ENCODE measurements at regions of chr2 and their contacts with region 1.

Region 1: GRCh38 chr2:54723131-54723995 is at the start of gene EML6:
- DNase-seq: peak; percentile 99
- H3K4me3 Mint-ChIP-seq: peak within 1 kb of the TSS; percentile 89
- H3K27ac Mint-ChIP-seq: peak within 1 kb of the TSS; percentile 64
- H3K4me1 Mint-ChIP-seq: peaks cover 17% of the 10 kb centered on the region
- H3K27me3 Mint-ChIP-seq: peaks cover 77% of the 10 kb centered on the region
- total RNA-seq, gene EML6: 0.23 and 0.25 TPM in 2 replicates

Region 2: GRCh38 chr2:54115284-54116137 is 607.9 kb before region 1 on chr2 and contains the start of gene ACYP2:
- intact Hi-C with region 1: loop called (anchors 1 kb)
- DNase-seq: peak; percentile 88
- H3K4me3 Mint-ChIP-seq: peak within 1 kb of the TSS; percentile 89
- H3K27ac Mint-ChIP-seq: peak within 1 kb of the TSS; percentile 97
- H3K4me1 Mint-ChIP-seq: peaks cover 7% of the 10 kb centered on the region
- H3K27me3 Mint-ChIP-seq: peaks cover 8% of the 10 kb centered on the region
- total RNA-seq, gene ACYP2: 4.3 and 6.5 TPM in 2 replicates

Region 3: GRCh38 chr2:54669677-54670479 is 53.5 kb before region 1 on chr2:
- intact Hi-C with region 1: no loop called
- DNase-seq: no peak
- H3K4me3 Mint-ChIP-seq: no peak overlapping the region
- H3K27ac Mint-ChIP-seq: no peak overlapping the region
- H3K4me1 Mint-ChIP-seq: peaks cover 28% of the 10 kb centered on the region
- H3K27me3 Mint-ChIP-seq: peaks cover 4% of the 10 kb centered on the region

Region 4: DNA sequence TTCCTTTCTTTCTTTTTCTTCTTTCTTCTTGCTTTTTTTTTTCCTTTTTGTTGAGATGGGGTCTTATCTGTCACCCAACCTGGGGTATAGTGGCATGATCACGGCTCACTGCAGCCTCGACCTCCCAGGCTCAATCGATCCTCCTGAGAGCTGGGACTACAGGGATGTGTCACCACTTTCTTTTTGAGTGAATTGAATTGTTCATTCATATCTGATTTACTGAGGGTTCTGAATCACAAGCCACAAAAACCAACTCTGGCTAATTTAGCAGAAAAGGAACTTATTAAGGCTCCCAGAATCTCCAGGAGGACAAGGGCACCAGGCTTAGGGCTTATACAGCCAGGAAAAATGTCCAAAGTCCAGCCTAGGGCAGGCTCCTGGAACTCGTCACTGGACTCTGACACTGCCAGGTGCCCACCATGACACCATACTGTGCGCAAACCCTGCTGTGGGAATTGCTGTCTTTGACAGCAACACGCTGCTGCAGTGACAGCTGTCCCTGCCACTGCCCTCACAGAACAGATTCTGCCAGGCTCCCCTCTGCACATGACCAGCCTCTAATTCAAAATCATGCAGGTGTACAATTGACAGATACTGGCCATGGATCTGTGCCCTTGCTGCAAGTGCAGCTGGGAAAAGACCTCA is 42.8 kb before region 1 on chr2:
- intact Hi-C with region 1: loop called (anchors 2 kb)
- DNase-seq: peak; percentile 39
- H3K4me3 Mint-ChIP-seq: peak overlapping the region; percentile 78
- H3K27ac Mint-ChIP-seq: peak overlapping the region; percentile 65
- H3K4me1 Mint-ChIP-seq: peaks cover 61% of the 10 kb centered on the region
- H3K27me3 Mint-ChIP-seq: peaks cover 54% of the 10 kb centered on the region

Region 5: DNA sequence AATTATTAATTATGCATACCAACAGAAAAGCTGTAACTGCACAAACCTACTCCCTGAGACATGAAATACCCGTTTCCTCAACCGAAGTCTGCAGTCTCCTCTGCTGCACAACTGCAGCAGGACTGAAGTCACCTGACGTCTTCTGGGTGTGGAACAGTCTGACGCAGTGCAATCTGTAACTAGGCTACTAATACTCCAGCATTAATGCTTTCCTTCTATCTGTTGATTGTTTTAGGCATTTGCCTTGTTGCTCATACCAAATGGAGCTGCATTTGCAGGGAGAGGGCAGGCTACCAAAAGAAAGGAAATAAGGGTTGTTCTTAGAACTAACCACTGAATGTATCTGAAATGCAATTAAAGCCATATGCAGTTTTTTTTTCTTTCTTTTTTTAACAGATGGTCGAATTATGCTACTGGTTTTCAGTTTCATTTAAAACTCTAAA is 286.8 kb after region 1 on chr2:
- intact Hi-C with region 1: loop called (anchors 10 kb)
- DNase-seq: peak; percentile 40
- H3K4me3 Mint-ChIP-seq: peak overlapping the region; percentile 85
- H3K27ac Mint-ChIP-seq: peak overlapping the region; percentile 70
- H3K4me1 Mint-ChIP-seq: peaks cover 56% of the 10 kb centered on the region
- H3K27me3 Mint-ChIP-seq: no peaks in the 10 kb centered on the region

Region 6: GRCh38 chr2:55175254-55176025 is 452.1 kb after region 1 on chr2:
- intact Hi-C with region 1: loop called (anchors 10 kb)
- DNase-seq: no peak
- H3K4me3 Mint-ChIP-seq: no peak overlapping the region
- H3K27ac Mint-ChIP-seq: no peak overlapping the region
- H3K4me1 Mint-ChIP-seq: no peaks in the 10 kb centered on the region
- H3K27me3 Mint-ChIP-seq: peaks cover 2% of the 10 kb centered on the region